ENCODE measurements at regions of chr3 and their contacts with region 1.

Region 1: DNA sequence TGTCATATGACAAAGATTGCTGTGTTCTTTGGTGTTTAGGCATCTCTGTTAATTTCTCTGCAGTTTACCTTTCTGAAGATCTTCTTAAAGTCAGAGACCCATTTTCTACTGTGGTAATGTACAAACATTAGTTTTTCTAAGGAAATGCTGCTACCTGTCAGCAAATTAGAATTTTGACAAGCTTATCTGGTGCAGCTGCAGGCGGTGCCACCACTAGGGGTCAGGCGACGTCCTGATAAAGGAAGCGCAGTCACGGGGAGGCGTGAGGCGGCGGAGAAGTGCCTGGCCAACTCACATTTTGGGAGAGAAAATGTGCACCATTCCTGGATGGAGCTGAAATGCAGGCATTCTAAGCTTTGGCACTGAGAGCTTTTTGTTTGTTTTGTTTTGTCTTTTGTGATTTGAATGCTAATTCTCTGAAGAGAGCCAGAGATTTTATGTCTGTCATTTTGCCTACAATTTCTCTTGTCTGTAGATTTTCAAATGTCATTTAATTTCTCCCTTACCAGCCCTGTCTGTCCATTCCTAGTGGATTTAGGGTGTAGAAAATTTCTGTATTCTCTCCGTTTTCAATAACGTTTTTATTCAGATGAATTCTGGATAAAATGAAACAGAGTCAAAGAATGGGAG is 24.9 kb upstream of the SIAH2 start:
- DNase-seq: peak; percentile 86
- H3K4me3 Mint-ChIP-seq: no peak overlapping the region
- H3K27ac Mint-ChIP-seq: no peak overlapping the region
- H3K4me1 Mint-ChIP-seq: peaks cover 7% of the 10 kb centered on the region
- H3K27me3 Mint-ChIP-seq: peaks cover 12% of the 10 kb centered on the region

Region 2: GRCh38 chr3:150763122-150763841 is 24.6 kb before region 1 on chr3 and contains the start of gene SIAH2:
- CTCF ChIA-PET with region 1: interaction called, 45 read pairs
- DNase-seq: peak; percentile 94
- H3K4me3 Mint-ChIP-seq: peak within 1 kb of the TSS; percentile 94
- H3K27ac Mint-ChIP-seq: peak within 1 kb of the TSS; percentile 100
- H3K4me1 Mint-ChIP-seq: peaks cover 46% of the 10 kb centered on the region
- H3K27me3 Mint-ChIP-seq: peaks cover 6% of the 10 kb centered on the region

Region 3: DNA sequence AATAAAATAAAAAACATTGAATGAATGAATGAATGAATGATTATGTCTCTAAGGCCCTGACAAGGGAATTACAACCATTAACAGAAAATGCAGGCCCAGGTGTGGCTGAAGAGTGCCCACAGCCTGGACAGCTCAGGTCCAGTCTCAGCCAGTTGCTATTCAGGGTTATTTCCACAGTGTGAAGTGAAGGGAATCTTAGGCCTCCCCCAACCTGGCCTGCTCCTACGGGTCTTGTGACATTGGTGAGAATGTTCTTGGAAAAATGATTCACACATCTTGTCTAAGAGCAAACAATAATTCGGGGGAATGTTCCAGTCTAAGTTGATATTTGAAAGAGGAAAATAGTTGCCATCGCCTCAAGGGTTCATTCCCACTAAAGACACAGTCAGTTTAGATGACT is 80.4 kb after region 1 on chr3:
- CTCF ChIA-PET with region 1: interaction called, 27 read pairs
- DNase-seq: no peak
- H3K4me3 Mint-ChIP-seq: no peak overlapping the region
- H3K27ac Mint-ChIP-seq: no peak overlapping the region
- H3K4me1 Mint-ChIP-seq: no peaks in the 10 kb centered on the region
- H3K27me3 Mint-ChIP-seq: peaks cover 20% of the 10 kb centered on the region

Measured in activated naive CD4-positive, alpha-beta T cell treated with anti-CD3 and anti-CD28 coated beads, Interleukin-2, amount 10 ng/mL, durations not matched to agents 7 days and 5 days (primary cell).